Activated naive CD4-positive, alpha-beta T cell treated with anti-CD3 and anti-CD28 coated beads for 36 hours (primary cell): ENCODE measurements at regions of chr1 and their contacts with region 1.

Region 1: DNA sequence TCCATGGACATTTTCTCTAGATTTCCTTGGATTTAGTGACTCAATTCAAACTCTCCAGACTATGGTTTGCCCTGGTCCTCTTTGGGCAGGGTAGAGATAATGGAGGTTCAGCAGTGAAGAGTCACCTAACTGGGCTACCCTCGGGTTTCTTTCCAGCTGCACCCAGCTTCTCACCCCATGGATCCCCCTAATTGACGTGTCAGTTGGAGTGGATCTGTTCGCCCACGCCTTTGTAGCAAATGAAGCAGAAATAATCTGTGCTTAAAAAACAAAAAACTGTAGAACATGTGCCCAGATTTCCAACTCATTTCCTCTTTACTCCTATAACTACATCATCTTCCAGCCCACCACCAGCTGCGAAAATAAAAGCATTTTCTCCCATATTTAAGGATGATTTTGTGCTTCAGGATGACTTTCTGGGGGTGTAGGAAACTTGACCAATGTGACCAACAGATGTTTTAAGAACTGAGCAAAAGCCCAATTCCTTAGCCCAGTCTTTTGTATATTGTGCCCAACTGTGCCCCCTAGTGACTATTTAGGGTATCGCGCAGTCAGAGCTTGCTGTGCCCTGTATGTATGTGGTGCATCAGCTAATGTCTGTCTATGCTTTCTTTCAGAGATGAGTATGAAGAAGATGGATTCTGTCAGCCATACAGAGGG is 66.5 kb upstream of the UBE2U start:
- DNase-seq: peak; percentile 86
- H3K4me3 Mint-ChIP-seq: no peak overlapping the region
- H3K27ac Mint-ChIP-seq: no peak overlapping the region
- H3K4me1 Mint-ChIP-seq: no peaks in the 10 kb centered on the region
- H3K27me3 Mint-ChIP-seq: no peaks in the 10 kb centered on the region

Region 2: DNA sequence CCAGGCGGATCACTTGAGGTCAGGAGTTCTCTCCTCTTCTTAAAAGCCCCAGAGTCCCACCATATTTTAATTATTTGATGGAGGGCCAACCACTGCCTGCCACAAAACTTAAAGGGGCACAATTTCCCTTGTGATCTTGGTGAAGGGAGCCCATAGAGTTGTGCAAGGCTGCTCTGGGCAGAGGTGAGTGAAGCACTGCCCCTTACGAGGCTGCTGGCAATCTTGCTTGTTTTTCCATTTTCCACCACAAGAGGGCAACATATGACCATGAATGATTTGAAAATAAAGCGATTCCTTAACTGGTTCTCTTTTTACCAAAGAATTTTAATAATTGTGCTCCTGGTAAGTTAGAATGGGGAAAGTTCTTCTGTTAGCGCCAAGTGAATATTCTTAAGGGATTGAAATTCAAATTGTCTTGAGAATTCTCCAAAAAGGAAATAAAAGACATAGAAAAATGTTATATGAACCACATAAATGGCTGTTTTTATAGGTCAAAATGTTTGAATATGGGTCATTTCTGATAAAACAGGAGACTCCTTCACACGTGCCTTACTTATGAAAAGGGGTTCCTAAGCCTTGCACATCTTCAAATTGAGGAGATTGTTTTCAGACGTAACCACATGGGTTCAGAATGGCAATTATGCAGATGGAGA is 521.0 kb before region 1 on chr1:
- CTCF ChIA-PET with region 1: interaction called, 9 read pairs
- intact Hi-C with region 1: loop called (anchors 1 kb)
- DNase-seq: peak; percentile 58
- H3K4me3 Mint-ChIP-seq: no peak overlapping the region
- H3K27ac Mint-ChIP-seq: no peak overlapping the region
- H3K4me1 Mint-ChIP-seq: peaks cover 4% of the 10 kb centered on the region
- H3K27me3 Mint-ChIP-seq: no peaks in the 10 kb centered on the region

Region 3: DNA sequence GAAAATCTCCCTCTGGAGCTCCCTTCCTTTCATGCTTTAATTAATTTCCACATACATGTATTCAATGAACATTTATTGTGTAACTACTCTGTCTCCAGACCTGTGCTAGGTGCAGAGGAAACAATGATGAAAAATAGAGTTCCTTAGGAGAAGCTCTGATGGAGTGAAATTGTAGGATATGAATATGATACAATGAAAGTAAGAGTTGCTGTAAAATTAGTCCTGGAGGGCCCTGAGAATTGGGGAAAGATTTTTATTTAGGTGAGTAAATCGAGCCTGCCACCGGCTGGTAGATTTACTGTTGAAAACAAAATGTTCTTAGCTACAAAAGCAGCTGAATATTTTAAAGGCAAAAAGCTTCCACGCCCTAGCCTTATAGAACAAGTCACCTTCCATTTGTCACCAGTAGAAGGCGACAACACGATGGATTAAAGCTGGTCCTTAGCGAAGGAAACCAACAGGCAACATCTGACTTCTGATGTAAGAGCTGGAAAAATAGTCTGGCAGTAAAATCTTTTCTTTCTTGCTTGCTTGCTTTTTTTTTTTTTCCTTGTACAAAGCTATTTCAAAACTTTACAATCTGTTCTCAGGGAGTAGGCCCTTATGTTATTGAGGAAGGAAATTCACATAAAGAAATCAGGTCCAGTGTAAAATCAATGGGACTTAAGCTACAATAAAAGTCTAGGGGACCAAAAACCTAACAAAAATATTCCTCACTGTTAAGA is 445.0 kb before region 1 on chr1:
- CTCF ChIA-PET with region 1: interaction called, 35 read pairs
- intact Hi-C with region 1: loop called (anchors 1 kb)
- DNase-seq: peak; percentile 65
- H3K4me3 Mint-ChIP-seq: no peak overlapping the region
- H3K27ac Mint-ChIP-seq: no peak overlapping the region
- H3K4me1 Mint-ChIP-seq: peaks cover 5% of the 10 kb centered on the region
- H3K27me3 Mint-ChIP-seq: no peaks in the 10 kb centered on the region

Region 4: GRCh38 chr1:63773815-63774616 is 362.9 kb before region 1 on chr1 and contains the start of gene ROR1:
- CTCF ChIA-PET with region 1: interaction called, 5 read pairs
- intact Hi-C with region 1: loop called (anchors 1 kb)
- DNase-seq: peak; percentile 87
- H3K4me3 Mint-ChIP-seq: peak within 1 kb of the TSS; percentile 76
- H3K27ac Mint-ChIP-seq: no peak within 1 kb of the TSS
- H3K4me1 Mint-ChIP-seq: peaks cover 17% of the 10 kb centered on the region
- H3K27me3 Mint-ChIP-seq: peaks cover 52% of the 10 kb centered on the region
- total RNA-seq, gene ROR1: 0.10 to 0.14 TPM

Region 5: GRCh38 chr1:63917571-63918417 is 219.1 kb before region 1 on chr1:
- CTCF ChIA-PET with region 1: interaction called, 4 read pairs
- intact Hi-C with region 1: loop called (anchors 5 kb)
- DNase-seq: peak; percentile 42
- H3K4me3 Mint-ChIP-seq: no peak overlapping the region
- H3K27ac Mint-ChIP-seq: no peak overlapping the region
- H3K4me1 Mint-ChIP-seq: no peaks in the 10 kb centered on the region
- H3K27me3 Mint-ChIP-seq: no peaks in the 10 kb centered on the region

Region 6: DNA sequence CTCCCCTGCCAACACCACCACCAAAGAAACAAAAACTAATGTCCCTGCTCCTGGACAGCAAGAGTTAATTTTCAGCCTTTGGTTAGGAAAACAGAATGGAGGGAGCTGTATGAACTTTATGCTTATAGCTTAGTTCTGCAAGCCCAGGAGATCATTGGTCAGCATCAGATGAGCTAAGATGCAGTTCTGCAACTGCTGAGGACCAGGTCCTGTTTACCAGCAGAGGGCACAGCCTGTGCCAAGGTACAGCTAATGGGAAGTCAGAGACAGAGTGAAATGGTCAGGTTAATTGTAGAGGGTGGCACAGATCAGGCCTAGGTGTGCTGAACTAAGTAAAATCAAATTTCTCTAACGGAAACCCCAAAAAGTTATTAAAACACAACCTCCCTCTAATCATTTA is 201.7 kb before region 1 on chr1:
- CTCF ChIA-PET with region 1: no interaction called
- intact Hi-C with region 1: loop called (anchors 1 kb)
- DNase-seq: no peak
- H3K4me3 Mint-ChIP-seq: no peak overlapping the region
- H3K27ac Mint-ChIP-seq: no peak overlapping the region
- H3K4me1 Mint-ChIP-seq: no peaks in the 10 kb centered on the region
- H3K27me3 Mint-ChIP-seq: no peaks in the 10 kb centered on the region

Region 7: GRCh38 chr1:64112281-64112680 is 24.6 kb before region 1 on chr1:
- CTCF ChIA-PET with region 1: interaction called, 11 read pairs
- intact Hi-C with region 1: no loop called
- DNase-seq: no peak
- H3K4me3 Mint-ChIP-seq: no peak overlapping the region
- H3K27ac Mint-ChIP-seq: no peak overlapping the region
- H3K4me1 Mint-ChIP-seq: no peaks in the 10 kb centered on the region
- H3K27me3 Mint-ChIP-seq: peaks cover 2% of the 10 kb centered on the region